Right lobe of liver (tissue), 6 donors: ENCODE measurements at regions of chr5 and their contacts with region 1.

Region 1: DNA sequence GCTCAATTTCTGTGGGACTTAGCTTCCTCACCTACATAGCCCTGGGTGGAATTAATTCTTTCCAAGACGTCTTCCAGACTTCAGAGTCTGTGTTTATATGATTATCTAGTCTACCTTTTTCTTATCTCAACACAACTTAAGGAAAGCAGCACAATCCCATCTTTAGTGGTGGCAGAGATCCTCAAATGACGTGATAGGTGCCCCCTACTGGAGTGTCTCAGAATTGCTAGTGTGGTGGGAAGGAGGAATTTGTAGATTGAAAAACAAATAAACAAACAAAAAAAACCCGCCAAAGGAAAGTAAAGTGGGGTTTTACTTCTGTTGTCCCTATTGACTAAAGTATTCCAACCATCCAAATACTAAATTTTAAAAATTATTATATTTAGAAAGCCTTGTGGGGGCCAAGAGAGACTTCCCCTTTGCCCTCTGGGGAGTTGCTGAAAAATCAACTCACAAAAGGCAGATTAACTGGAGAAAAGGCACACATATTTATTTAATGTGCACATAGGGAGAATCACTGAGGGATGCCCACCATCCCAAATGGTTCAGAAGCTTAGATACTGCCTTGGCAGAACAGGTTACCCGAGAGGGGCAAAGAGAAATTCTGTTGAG is 283.3 kb downstream of the TMEM167A start:
- DNase-seq: no peak
- ATAC-seq: peak; percentile 62 to 76 (median 66)
- H3K4me3 ChIP-seq: no peak overlapping the region
- H3K27ac ChIP-seq: no peak overlapping the region
- H3K4me1 ChIP-seq: no peaks in the 10 kb centered on the region
- H3K27me3 ChIP-seq: no peaks in the 10 kb centered on the region
- CTCF ChIP-seq: peak; percentile 61 to 73 (median 68)
- POLR2A ChIP-seq: no peak

Region 2: GRCh38 chr5:82351754-82352145 is 442.2 kb before region 1 on chr5:
- intact Hi-C with region 1: loop called in 1 of 2 experiments (anchors 10 kb)
- DNase-seq: no peak
- ATAC-seq: peak; percentile 95 to 99 (median 97)
- H3K4me3 ChIP-seq: no peak overlapping the region
- H3K27ac ChIP-seq: no peak overlapping the region
- H3K4me1 ChIP-seq: peaks cover 0 to 2% (median 0%) of the 10 kb centered on the region in 4 donors
- H3K27me3 ChIP-seq: no peaks in the 10 kb centered on the region
- CTCF ChIP-seq: peak; percentile 74 to 97 (median 79)
- POLR2A ChIP-seq: no peak

Region 3: DNA sequence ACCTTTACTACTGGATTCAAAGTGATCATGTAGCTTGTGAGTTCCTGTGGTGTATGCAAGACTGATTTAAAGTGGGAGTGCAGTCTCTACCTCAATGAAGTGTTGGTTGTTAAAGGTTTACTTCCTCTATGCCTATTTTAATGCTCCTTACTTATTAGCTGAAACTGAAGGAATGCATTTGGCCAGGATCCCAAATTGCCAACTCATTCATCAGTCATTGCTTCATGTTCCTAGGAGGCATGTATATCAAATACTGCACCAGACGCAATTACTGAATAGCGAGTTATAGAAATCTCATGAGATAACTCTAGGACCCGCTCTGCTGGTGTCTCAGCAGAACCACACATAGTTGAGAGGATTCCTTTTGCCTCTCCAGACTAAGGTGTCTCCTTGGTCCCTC is 372.8 kb before region 1 on chr5:
- intact Hi-C with region 1: no loop called
- DNase-seq: no peak
- ATAC-seq: no peak
- H3K4me3 ChIP-seq: no peak overlapping the region
- H3K27ac ChIP-seq: no peak overlapping the region
- H3K4me1 ChIP-seq: no peaks in the 10 kb centered on the region
- H3K27me3 ChIP-seq: no peaks in the 10 kb centered on the region
- CTCF ChIP-seq: no peak
- POLR2A ChIP-seq: no peak